ENCODE measurements at regions of chr17 and their contacts with region 1.

Region 1: DNA sequence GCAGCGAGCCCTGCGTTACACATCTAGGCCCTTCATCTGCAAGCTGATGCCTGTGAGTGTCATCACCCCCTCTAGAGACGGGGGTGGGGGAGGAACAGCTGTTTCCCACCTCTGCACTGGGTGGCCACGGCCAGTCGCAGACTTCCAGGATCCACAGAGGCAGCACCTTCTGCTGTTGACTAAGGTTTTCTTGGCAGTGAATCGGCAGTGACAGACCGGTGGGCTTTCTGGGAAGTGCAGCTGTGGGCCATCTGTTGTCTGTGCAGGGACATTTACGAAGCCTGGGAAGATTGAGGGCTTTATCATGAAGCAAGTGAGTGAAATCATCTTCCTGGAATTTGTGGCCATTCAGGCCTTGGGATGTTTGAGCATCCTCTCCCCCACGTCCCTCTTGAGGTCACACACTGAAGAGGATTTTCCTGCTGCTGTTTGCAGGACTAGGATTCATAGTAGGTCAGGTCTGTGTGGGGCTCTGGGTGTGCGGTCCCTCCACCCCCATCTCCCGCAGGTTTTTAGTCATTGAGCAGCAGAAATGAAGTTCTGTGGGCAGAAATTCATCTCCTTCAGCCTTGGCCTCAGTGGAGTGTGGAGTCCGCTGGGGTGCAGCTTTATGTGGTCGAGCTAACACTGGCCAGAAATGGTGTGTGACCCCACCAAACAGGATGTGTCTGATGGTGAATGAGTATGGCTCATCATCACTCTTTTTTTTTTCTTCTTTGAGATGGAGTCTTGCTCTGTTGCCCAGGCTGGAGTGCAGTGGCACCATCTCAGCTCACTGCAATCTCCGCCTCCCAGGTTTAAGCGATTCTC is 12.0 kb downstream of the PGS1 start:
- DNase-seq: no peak
- H3K4me3 Mint-ChIP-seq: no peak overlapping the region
- H3K27ac Mint-ChIP-seq: peak overlapping the region; percentile 5
- H3K4me1 Mint-ChIP-seq: peaks cover 59% of the 10 kb centered on the region
- H3K27me3 Mint-ChIP-seq: no peaks in the 10 kb centered on the region

Region 2: DNA sequence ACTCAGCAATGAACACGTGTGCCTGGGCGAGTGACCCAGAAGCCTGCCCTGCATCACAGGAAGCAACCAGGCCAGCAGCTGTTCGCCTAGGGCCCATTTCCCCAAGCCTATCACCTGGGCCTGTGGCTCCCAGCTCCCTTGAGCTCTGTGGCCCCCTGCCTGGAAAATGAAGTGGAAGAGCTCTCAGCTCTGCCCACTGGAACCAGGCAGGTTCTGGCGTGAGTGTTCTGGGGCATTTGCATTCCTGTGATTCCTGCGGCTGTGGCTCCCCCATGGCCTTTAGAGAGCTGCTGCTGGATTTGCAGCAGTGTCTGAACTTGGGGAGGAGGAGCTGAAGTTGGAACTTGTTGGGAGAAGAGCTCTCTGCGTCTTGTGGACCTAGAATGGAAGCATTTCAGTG is 10.8 kb after region 1 on chr17:
- CTCF ChIA-PET with region 1: interaction called, 12 read pairs
- POLR2A ChIA-PET with region 1: interaction called, 3 read pairs
- DNase-seq: no peak
- H3K4me3 Mint-ChIP-seq: no peak overlapping the region
- H3K27ac Mint-ChIP-seq: no peak overlapping the region
- H3K4me1 Mint-ChIP-seq: peaks cover 5% of the 10 kb centered on the region
- H3K27me3 Mint-ChIP-seq: no peaks in the 10 kb centered on the region

Region 3: GRCh38 chr17:78412403-78412802 is 22.0 kb after region 1 on chr17:
- CTCF ChIA-PET with region 1: interaction called, 13 read pairs
- POLR2A ChIA-PET with region 1: no interaction called
- DNase-seq: peak; percentile 46
- H3K4me3 Mint-ChIP-seq: peak overlapping the region; percentile 72
- H3K27ac Mint-ChIP-seq: peak overlapping the region; percentile 91
- H3K4me1 Mint-ChIP-seq: peaks cover 92% of the 10 kb centered on the region
- H3K27me3 Mint-ChIP-seq: no peaks in the 10 kb centered on the region

Measured in activated CD4-positive, alpha-beta T cell treated with anti-CD3 and anti-CD28 coated beads, Interleukin-2, amount 10 ng/mL, durations not matched to agents 7 days and 5 days (primary cell).